ENCODE measurements at regions of chr14 and their contacts with region 1.

Region 1: GRCh38 chr14:34671716-34672115 is 41.8 kb upstream of the SNX6 start:
- DNase-seq: no peak
- ATAC-seq: no peak
- H3K4me3 ChIP-seq: no peak overlapping the region
- H3K4me1 ChIP-seq: no peaks in the 10 kb centered on the region
- CTCF ChIP-seq: no peak

Region 2: GRCh38 chr14:34436118-34436880 is 235.4 kb before region 1 on chr14:
- intact Hi-C with region 1: no loop called
- DNase-seq: peak in 1 of 3 donors; percentile 31
- ATAC-seq: peak; percentile 89
- H3K4me3 ChIP-seq: no peak overlapping the region
- H3K4me1 ChIP-seq: peaks cover 15% of the 10 kb centered on the region
- CTCF ChIP-seq: no peak

Region 3: DNA sequence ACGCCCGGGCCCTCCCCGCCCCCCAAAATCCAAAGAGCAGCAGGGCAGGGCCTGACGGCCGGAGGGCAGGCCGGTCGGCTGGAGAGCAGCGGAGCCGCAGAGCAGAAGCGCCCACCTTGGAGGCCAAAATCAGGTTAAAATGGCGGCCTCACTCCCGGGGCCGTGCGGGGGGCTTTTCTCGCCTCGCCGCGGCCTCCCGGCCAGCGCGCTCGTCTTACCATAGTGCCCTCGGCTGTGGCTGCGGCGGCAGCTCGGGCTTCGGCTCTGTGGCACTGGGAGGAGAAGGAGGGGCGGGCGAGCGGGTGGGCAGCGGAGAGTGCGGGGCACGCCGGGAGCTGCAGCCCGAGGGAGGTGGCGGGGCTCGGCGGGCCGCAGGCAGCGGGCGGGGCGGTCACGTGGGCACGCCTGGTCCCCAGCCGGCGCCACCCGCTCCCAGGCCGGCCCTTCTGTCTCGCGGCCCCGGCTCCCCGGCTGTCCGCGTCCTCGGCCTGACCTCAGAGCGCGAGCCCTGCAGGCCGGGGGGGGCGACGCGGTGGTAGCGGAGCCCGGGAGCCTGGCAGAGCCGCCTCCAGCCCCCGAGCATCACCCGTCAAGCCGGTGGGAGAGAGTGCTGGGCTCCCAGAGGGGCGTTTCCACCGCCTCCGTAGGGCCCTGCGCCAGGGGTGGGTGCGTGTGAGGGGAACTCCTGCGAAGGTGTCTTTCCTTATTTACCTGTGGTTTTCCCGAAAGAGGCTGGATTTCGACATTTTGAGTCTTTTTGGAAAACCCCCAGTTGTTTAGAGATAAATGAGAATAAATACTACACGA is 42.8 kb after region 1 on chr14 and contains the start of gene CFL2:
- intact Hi-C with region 1: loop called in 1 of 2 experiments (anchors 5 kb)
- DNase-seq: peak; percentile 78 to 90 (median 88)
- ATAC-seq: peak; percentile 98
- H3K4me3 ChIP-seq: peak within 1 kb of the TSS; percentile 83
- H3K4me1 ChIP-seq: no peaks in the 10 kb centered on the region
- CTCF ChIP-seq: no peak
- total RNA-seq, gene CFL2: 6.5 to 126 (median 20.9) TPM

Region 4: GRCh38 chr14:34722717-34723545 is 51.2 kb after region 1 on chr14:
- intact Hi-C with region 1: loop called (anchors 5 kb)
- DNase-seq: peak in 1 of 3 donors; percentile 69
- ATAC-seq: peak; percentile 66
- H3K4me3 ChIP-seq: no peak overlapping the region
- H3K4me1 ChIP-seq: no peaks in the 10 kb centered on the region
- CTCF ChIP-seq: peak; percentile 61

Region 5: GRCh38 chr14:35446450-35446849 is 774.7 kb after region 1 on chr14:
- intact Hi-C with region 1: no loop called
- DNase-seq: no peak
- ATAC-seq: no peak
- H3K4me3 ChIP-seq: no peak overlapping the region
- H3K4me1 ChIP-seq: no peaks in the 10 kb centered on the region
- CTCF ChIP-seq: no peak

Measured in mucosa of descending colon (tissue), 3 donors.